GM12878 (cell line): ENCODE measurements at regions of chr6 and their contacts with region 1.

Region 1: DNA sequence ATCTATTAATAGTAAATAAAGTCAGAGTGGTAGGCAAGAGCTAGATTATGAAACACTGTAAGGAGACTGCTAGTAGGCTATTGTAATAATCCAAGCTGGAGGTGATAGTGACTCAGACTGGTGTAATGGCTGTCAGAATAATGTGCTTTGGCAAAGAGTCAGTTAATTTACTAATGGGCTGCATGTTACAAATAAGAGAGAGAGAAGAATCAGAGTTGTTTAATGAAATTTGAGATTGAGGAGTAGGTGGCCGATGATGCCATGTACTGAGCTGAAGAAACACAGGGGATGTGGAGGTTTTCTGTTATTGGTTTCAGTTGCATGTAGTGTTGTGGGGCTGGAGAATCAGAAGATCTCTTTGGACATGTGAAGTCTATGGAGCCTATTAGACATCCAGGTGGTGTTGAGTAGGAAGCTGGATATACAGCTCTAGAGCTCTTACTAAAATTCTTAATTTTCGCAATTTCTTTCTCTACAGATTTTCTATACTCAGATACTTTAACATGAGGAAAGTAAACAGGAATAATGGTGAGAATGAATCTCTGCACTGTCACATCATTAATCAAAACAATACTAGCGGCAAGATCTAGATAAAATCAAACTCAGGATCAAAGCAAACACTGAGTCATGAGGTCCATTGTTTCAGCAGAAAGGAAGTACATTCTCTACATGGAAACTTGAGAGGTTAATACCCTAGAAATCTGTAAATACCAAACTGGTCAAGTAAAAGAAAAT is 167.7 kb downstream of the SIM1 start:
- DNase-seq: no peak
- ATAC-seq: no peak
- H3K4me3 ChIP-seq: no peak overlapping the region
- H3K27ac ChIP-seq: no peak overlapping the region
- H3K4me1 ChIP-seq: no peaks in the 10 kb centered on the region
- H3K27me3 ChIP-seq: no peaks in the 10 kb centered on the region
- CTCF ChIP-seq: no peak
- EP300 ChIP-seq: no peak
- POLR2A ChIP-seq: no peak
- RAD21 ChIP-seq: no peak

Region 2: DNA sequence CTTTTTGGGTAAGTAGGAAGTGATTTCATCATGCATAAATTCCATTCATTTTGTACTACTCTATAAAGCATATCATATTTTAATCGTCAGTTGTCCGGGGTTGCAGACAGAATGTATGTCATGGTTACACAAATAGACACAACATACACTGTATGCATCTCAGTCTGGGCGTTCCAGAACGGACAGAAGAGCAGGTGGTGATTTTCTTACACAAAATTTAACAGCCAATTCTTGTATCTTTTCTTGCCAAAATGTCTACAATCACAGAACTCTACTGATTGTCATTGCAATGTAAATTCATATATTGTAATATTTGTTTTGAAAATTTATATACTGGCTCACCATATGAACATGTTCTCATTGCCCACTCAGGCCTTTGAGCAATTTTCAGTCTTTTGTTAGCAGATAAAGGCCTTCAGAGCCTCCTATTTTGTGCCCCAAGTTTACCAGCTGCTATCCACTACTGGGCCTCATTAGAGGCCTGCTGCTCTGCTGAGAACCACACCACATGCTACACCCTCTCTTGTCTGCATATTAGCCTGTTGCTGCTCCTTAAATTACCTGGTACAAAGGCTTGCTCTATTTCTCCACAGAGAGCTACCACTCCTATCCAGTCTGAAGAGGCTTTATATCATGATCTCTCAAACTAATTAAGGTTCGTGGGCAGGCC is 628.8 kb before region 1 on chr6:
- CTCF ChIA-PET with region 1: no interaction called
- POLR2A ChIA-PET with region 1: no interaction called
- RAD21 ChIA-PET with region 1: no interaction called
- SMC1A ChIA-PET with region 1: no interaction called
- in situ Hi-C with region 1: no loop called
- intact Hi-C with region 1: loop called (anchors 10 kb)
- DNase-seq: no peak
- ATAC-seq: no peak
- H3K4me3 ChIP-seq: no peak overlapping the region
- H3K27ac ChIP-seq: no peak overlapping the region
- H3K4me1 ChIP-seq: no peaks in the 10 kb centered on the region
- H3K27me3 ChIP-seq: no peaks in the 10 kb centered on the region
- CTCF ChIP-seq: no peak
- EP300 ChIP-seq: no peak
- POLR2A ChIP-seq: no peak
- RAD21 ChIP-seq: no peak

Region 3: GRCh38 chr6:100269189-100269588 is 27.8 kb before region 1 on chr6:
- CTCF ChIA-PET with region 1: no interaction called
- POLR2A ChIA-PET with region 1: no interaction called
- RAD21 ChIA-PET with region 1: no interaction called
- SMC1A ChIA-PET with region 1: no interaction called
- in situ Hi-C with region 1: no loop called
- intact Hi-C with region 1: no loop called
- DNase-seq: no peak
- ATAC-seq: no peak
- H3K4me3 ChIP-seq: no peak overlapping the region
- H3K27ac ChIP-seq: no peak overlapping the region
- H3K4me1 ChIP-seq: no peaks in the 10 kb centered on the region
- H3K27me3 ChIP-seq: peaks cover 0 to 5% of the 10 kb centered on the region in 2 experiments; a peak in 1 of 4 replicates
- CTCF ChIP-seq: no peak
- EP300 ChIP-seq: no peak
- POLR2A ChIP-seq: no peak
- RAD21 ChIP-seq: no peak